ENCODE measurements at regions of chr20 and their contacts with region 1.

Region 1: GRCh38 chr20:47973519-47974233 is 188.4 kb upstream of the SULF2 start:
- DNase-seq: peak; percentile 50
- H3K4me3 ChIP-seq: no peak overlapping the region
- H3K27ac ChIP-seq: peak overlapping the region; percentile 34
- H3K4me1 ChIP-seq: peaks cover 21% of the 10 kb centered on the region
- H3K27me3 ChIP-seq: no peaks in the 10 kb centered on the region
- CTCF ChIP-seq: no peak
- POLR2A ChIP-seq: no peak

Region 2: GRCh38 chr20:47778398-47779338 is 195.0 kb before region 1 on chr20:
- CTCF ChIA-PET with region 1: no interaction called
- POLR2A ChIA-PET with region 1: no interaction called
- dilution Hi-C with region 1: no loop called
- intact Hi-C with region 1: no loop called
- DNase-seq: no peak
- H3K4me3 ChIP-seq: no peak overlapping the region
- H3K27ac ChIP-seq: no peak overlapping the region
- H3K4me1 ChIP-seq: peaks cover 13% of the 10 kb centered on the region
- H3K27me3 ChIP-seq: peaks cover 0 to 3% of the 10 kb centered on the region in 2 experiments
- CTCF ChIP-seq: no peak
- POLR2A ChIP-seq: no peak

Region 3: GRCh38 chr20:47792021-47792618 is 181.6 kb before region 1 on chr20:
- CTCF ChIA-PET with region 1: no interaction called
- POLR2A ChIA-PET with region 1: no interaction called
- dilution Hi-C with region 1: no loop called
- intact Hi-C with region 1: loop called (anchors 10 kb)
- DNase-seq: peak; percentile 75
- H3K4me3 ChIP-seq: no peak overlapping the region
- H3K27ac ChIP-seq: no peak overlapping the region
- H3K4me1 ChIP-seq: peaks cover 3% of the 10 kb centered on the region
- H3K27me3 ChIP-seq: peaks cover 0 to 3% of the 10 kb centered on the region in 2 experiments
- CTCF ChIP-seq: no peak
- POLR2A ChIP-seq: no peak

Region 4: DNA sequence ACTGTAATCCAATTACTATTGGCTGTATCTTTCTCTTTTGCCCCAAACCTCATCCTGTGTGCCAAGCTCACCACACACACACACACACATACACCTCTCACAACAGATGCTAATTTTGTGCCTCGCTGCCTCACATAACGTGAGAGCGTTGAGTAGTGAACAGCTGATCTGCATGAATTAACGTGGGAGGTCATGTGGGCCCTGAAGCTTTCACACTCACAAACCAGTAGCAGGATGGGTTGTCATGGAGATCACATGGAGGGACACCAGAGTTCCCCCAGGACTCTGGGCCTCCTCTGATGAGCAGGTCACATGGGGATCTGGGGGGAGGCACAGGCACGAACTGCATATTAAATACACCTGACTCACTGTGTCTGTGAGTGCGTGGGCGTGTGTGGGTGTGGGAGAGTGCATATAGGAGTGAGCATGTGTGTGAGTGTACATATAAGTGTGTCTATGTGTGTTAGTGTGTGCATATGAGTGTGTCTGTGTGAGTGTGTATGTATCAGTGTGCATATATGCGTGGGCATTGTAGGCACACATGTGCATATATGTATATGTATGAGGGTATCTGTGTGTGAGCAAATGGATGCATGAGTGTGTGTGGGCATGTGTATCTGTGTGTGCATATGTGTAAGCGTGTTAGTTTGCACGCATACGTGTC is 125.7 kb before region 1 on chr20:
- CTCF ChIA-PET with region 1: no interaction called
- POLR2A ChIA-PET with region 1: no interaction called
- dilution Hi-C with region 1: no loop called
- intact Hi-C with region 1: no loop called
- DNase-seq: no peak
- H3K4me3 ChIP-seq: no peak overlapping the region
- H3K27ac ChIP-seq: no peak overlapping the region
- H3K4me1 ChIP-seq: peaks cover 4% of the 10 kb centered on the region
- H3K27me3 ChIP-seq: no peaks in the 10 kb centered on the region
- CTCF ChIP-seq: no peak
- POLR2A ChIP-seq: no peak